Activated CD4-positive, alpha-beta T cell treated with anti-CD3 and anti-CD28 coated beads for 36 hours (primary cell): ENCODE measurements at regions of chr16 and their contacts with region 1.

Region 1: DNA sequence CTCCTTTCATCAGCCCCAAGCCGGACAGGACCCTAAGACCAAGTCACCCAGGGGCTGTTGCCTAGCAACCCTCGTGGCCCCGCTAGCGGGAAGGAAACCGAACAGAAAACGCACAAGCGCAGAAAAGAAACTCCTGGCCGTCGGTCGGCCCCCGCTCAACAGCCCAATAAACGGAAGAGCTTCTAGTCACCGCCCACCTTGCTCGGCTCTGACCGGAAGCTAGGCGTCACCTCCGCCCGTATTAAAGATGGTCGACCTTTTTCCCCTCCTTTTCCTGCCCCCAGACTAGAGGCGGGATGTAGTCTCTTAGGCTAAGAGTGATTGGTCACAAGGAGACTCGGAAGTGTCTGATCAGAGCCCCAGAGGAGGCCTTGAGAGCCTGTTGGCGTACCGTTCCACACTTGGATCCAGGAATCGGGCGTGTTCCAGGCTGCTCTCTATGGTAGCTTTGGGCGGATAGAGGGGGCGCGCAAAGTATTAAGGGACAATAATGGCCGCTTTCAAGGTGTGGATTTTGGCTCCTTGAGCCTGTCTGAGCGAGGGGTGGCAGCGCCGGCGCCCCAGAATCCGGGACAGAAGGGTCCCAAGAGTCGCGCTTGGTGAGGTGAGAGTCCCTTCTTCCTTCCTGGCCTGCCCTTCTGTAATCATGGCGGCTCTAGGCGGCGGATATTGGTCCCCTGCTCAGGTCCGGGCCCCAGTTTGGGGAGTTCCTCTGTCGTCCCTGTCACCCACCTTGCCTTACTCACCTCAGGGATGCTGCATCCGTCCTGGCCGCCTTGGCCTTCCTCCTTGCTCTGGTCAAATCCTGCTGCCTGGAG is at the starts of genes DHX38 and TXNL4B:
- DNase-seq: peak; percentile 95
- ATAC-seq: peak; percentile 98
- H3K4me3 Mint-ChIP-seq: peak within 1 kb of the TSS; percentile 96
- H3K27ac Mint-ChIP-seq: peak within 1 kb of the TSS; percentile 92
- H3K4me1 Mint-ChIP-seq: peaks cover 41% of the 10 kb centered on the region
- H3K27me3 Mint-ChIP-seq: no peaks in the 10 kb centered on the region
- total RNA-seq, gene DHX38: 55.9 to 79.0 TPM
- total RNA-seq, gene TXNL4B: 17.6 to 24.6 TPM

Region 2: DNA sequence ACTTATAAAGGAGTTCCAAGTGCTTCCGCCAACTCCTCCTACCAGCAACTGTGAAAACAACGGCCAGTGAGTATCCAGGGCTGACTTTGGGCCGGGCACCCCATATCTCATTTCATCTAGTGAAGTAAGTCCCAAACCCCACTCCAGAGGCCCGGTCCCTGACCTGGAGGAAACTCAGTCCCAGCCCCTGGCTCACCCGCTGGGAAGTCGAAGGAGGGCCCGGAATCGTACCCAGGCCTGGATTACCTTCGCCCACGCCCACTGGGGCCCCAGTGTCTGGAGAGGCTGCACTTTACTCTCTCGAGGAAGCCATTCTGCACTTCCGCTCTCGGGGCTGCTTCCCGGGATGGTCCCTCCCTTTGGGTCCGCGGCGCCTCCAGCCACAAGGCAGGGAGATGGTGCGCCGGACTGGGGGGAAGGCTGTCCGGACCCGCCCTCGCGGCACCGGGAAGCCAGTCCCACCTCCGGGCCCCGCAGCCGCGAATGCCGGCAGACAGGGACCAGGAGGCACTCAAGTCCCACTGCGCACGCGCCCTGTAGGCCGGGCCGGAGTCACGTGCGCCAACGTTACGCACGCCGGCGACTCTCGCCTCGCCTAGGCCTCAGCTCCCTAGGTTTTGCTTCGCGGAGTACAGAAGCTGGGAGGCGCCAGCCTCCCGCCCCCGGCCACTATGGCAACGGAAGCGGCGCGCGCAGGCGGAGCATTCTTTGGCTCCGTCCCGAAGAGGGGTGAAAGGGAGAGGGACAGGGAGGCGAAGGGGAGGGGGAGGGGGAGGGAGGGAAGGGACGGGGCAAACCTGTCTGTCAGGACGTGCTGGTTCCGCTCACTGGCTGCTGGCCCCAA is 804.5 kb before region 1 on chr16 and contains the start of gene CMTR2:
- CTCF ChIA-PET with region 1: no interaction called
- POLR2A ChIA-PET with region 1: no interaction called
- intact Hi-C with region 1: loop called in 1 of 2 experiments (anchors 1 kb)
- DNase-seq: peak; percentile 95
- ATAC-seq: peak; percentile 97
- H3K4me3 Mint-ChIP-seq: peak within 1 kb of the TSS; percentile 83
- H3K27ac Mint-ChIP-seq: peak within 1 kb of the TSS; percentile 90
- H3K4me1 Mint-ChIP-seq: peaks cover 15% of the 10 kb centered on the region
- H3K27me3 Mint-ChIP-seq: peaks cover 16% of the 10 kb centered on the region
- total RNA-seq, gene CMTR2: 15.8 to 16.5 TPM

Region 3: DNA sequence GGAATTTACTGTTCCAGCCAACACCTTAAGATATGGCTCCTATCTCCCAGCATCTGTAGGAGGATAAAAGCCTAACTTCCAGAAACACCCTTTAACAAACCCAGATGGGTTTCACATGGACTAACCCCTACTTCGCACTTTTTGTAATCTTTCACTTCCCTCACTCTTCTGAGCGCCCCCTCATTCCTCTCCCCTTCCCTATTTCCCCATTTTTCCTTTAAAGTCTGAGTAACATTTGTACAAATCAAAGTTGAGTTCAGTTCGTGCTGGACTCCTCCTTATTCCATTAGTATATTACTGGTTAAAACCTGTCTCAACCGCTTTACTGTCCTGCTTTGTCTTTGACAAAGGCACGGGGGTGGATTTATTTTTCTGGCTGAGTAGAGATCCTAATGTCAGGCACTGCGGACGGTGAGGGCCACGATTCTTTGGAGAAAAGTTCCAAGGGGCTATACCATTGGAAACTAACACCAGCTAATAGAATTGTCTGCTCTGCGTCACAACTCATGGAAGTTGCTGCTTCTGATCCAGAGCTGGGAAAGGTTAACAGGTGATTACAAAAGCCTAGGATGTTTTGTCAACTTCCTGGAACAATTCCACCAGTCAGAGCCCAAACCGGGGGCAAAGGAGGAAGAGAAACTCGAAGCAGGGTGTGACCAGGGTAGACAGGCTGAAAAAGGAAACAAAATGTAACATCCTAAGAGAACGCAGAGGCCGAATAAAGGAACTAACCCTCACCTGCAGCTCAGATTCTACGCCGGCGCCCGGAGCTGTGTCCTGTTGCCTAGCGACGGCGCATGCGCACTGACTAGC is 529.3 kb before region 1 on chr16:
- CTCF ChIA-PET with region 1: no interaction called
- POLR2A ChIA-PET with region 1: no interaction called
- intact Hi-C with region 1: loop called in 1 of 2 experiments (anchors 1 kb)
- DNase-seq: no peak
- ATAC-seq: no peak
- H3K4me3 Mint-ChIP-seq: peak overlapping the region; percentile 87
- H3K27ac Mint-ChIP-seq: peak overlapping the region; percentile 98
- H3K4me1 Mint-ChIP-seq: peaks cover 15% of the 10 kb centered on the region
- H3K27me3 Mint-ChIP-seq: no peaks in the 10 kb centered on the region

Region 4: GRCh38 chr16:71845639-71846430 is 247.8 kb before region 1 on chr16 and contains the start of gene ATXN1L:
- CTCF ChIA-PET with region 1: no interaction called
- POLR2A ChIA-PET with region 1: no interaction called
- intact Hi-C with region 1: loop called in 1 of 2 experiments (anchors 2 kb)
- DNase-seq: peak; percentile 95
- ATAC-seq: peak; percentile 82
- H3K4me3 Mint-ChIP-seq: peak within 1 kb of the TSS; percentile 87
- H3K27ac Mint-ChIP-seq: peak within 1 kb of the TSS; percentile 93
- H3K4me1 Mint-ChIP-seq: peaks cover 43% of the 10 kb centered on the region
- H3K27me3 Mint-ChIP-seq: no peaks in the 10 kb centered on the region
- total RNA-seq, gene ATXN1L: 15.4 to 16.9 TPM

Region 5: DNA sequence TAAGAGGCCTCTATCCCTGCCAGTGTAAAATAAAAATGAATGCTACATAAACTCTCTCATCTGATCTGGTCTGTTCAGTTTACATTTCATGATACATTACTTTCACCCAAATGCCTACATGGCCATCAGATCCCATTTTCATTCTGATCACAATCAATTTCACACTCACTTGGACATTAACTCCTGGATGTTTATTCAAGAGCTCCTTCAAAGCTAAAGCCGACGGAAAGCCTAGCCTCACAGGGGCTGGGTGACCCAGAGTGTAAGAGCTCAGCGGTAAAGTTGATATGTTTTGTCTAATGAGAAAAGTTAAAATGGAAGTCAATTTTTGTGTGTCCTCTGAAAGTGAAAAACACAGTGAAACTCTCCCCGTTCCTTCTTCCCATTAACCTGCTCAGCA is 114.0 kb before region 1 on chr16:
- CTCF ChIA-PET with region 1: no interaction called
- POLR2A ChIA-PET with region 1: no interaction called
- intact Hi-C with region 1: no loop called
- DNase-seq: no peak
- ATAC-seq: no peak
- H3K4me3 Mint-ChIP-seq: no peak overlapping the region
- H3K27ac Mint-ChIP-seq: no peak overlapping the region
- H3K4me1 Mint-ChIP-seq: no peaks in the 10 kb centered on the region
- H3K27me3 Mint-ChIP-seq: peaks cover 5% of the 10 kb centered on the region

Region 6: DNA sequence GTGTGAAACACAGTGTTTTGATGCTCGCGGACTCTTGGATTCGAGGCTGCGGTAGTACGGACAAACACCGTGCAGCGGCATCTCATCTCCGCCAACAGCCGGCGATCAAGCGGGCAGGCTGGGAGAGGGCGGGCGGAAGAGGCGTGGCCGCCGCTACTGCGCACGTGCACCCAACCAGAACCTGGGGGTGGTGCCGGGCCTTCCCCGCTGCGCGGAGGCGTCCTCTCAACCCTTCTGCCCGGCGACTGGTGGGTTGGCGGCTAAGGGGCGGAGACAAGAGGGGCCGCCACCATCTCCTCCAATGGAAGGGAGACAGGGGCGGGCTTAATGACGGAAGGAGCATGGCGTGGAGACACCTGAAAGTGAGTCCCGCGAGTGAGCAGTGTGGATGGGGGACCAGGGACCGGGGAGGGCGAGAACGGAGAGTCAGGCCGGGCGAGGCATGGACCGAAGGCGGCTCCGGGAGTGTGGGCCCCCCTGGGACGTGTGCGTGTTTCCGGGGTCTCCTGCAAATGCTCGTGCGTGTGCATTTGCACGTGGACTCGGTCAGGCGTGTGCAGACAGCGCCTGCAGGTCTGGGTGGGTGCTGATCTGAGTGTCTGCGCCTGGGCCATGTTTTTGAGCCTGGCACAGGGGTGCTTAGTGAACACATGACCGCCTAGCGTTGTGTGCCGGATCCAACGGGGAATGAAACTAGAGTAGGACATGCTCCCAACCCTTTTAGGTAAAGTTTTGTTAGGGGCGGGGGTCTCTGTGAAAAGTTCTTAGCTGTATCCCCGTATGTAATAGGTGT is 85.0 kb before region 1 on chr16 and contains the start of gene DHODH:
- CTCF ChIA-PET with region 1: no interaction called
- POLR2A ChIA-PET with region 1: no interaction called
- intact Hi-C with region 1: loop called (anchors 1 kb)
- DNase-seq: peak; percentile 99
- ATAC-seq: peak; percentile 99
- H3K4me3 Mint-ChIP-seq: peak within 1 kb of the TSS; percentile 94
- H3K27ac Mint-ChIP-seq: peak within 1 kb of the TSS; percentile 96
- H3K4me1 Mint-ChIP-seq: peaks cover 21% of the 10 kb centered on the region
- H3K27me3 Mint-ChIP-seq: no peaks in the 10 kb centered on the region
- total RNA-seq, gene DHODH: 15.5 to 21.4 TPM